Colonic mucosa (tissue), 4 donors: ENCODE measurements at regions of chr17 and their contacts with region 1.

Region 1: DNA sequence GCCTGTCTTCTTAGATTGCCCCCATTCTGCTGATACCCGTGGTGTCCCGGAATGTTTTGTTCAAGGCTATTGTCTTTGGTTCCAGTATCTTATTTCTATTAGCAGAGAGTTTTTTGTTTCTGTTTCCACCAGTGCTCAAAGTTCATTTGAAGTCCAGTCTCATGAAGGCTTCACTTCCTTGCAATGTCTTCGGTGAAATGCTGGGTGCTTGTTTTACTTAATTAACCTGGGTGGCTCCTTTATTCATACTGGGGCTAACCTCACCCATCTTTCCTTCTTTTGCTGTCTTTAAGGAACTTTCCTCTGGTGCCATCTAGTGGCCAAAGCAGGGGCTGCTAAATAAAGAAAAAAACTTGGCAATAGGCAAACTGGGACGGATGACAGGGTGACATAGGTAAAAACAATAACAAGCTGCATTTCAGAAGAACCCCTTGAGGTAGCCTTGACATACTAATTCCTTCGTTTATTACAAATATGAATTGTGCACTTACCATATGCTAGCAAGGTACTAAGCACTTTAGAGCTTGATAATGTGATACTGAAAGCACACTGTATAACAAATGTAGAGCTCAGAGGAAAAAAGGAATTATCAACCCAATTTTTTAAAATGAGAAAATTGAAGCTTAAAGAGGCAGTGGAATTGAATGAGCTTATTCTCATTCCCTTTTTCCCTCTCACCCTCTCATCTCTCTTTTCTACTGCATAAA is 2.8 kb upstream of the SMIM36 start:
- DNase-seq: peak; percentile 88
- H3K4me3 ChIP-seq: no peak overlapping the region
- H3K27ac ChIP-seq: no peak overlapping the region
- H3K4me1 ChIP-seq: no peaks in the 10 kb centered on the region
- H3K27me3 ChIP-seq: no peaks in the 10 kb centered on the region
- CTCF ChIP-seq: peak; percentile 96

Region 2: DNA sequence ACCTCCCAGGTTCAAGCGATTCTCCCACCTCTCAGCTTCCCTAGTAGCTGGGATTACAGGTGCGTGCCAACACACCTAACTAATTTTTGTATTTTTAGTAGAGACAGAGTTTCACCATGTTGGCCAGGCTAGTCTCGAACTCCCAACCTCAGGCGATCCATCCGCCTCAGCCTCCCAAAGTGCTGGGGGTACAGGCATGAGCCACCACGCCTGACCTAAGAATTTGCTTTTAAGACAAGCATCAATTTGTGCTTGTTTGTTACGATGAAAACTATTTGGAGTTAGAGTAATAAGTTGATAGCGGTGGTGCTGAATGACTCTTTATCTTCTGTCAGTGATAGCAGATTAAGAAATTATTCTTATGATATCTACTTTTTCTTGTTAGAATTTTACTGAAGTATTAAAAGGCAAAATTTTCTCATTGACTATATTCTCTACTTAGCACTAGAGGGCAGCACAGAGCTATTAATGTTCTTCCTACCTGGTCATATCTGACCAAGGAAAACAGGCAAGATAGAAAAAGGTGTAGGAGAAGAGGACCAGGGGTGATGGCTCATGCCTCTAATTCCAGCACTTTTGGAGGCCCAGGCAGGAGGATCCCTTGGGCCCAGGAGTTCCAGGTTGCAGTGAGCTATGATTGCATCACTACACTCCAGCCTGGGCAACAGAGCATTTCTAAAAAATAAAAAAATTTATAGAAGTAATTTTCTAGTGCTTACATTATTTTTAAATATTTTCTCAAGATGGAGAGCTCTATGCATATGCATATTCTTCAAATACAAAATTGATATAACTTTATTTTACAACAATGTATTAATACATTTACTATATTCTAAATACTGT is 521.0 kb before region 1 on chr17:
- intact Hi-C with region 1: loop called (anchors 5 kb)
- DNase-seq: no peak
- H3K4me3 ChIP-seq: no peak overlapping the region
- H3K27ac ChIP-seq: no peak overlapping the region
- H3K4me1 ChIP-seq: no peaks in the 10 kb centered on the region
- H3K27me3 ChIP-seq: no peaks in the 10 kb centered on the region
- CTCF ChIP-seq: peak; percentile 55

Region 3: DNA sequence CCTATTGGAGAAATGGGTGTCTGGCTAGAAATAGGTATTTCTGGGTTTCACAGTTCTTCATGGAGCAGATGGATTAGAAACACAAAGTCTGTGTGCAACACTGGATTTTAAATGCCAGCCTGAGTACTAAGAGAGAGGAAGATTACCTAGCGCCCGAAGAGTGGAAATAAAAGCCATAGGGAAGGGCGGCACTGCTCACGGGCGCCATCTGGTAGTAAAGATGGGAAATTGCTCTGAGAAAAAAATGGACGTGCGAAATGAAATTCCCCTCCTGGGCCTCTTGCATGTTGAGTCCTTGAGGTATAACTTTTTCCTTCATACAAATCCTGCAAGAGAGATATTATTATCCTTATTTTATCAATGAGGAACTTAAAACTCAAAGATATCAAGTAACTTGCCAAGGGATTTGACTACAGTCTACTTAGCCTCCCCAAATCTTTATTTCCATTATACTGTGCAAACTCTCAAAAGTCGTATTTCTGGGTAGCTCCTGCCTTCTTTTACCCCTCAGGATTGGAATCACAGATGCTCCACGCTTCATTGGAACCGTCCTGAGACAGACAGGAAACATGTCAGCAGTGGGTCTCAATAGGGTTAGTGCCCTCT is 165.2 kb before region 1 on chr17:
- intact Hi-C with region 1: loop called (anchors 5 kb)
- DNase-seq: peak; percentile 46
- H3K4me3 ChIP-seq: no peak overlapping the region
- H3K27ac ChIP-seq: no peak overlapping the region
- H3K4me1 ChIP-seq: no peaks in the 10 kb centered on the region
- H3K27me3 ChIP-seq: no peaks in the 10 kb centered on the region
- CTCF ChIP-seq: peak; percentile 91

Region 4: DNA sequence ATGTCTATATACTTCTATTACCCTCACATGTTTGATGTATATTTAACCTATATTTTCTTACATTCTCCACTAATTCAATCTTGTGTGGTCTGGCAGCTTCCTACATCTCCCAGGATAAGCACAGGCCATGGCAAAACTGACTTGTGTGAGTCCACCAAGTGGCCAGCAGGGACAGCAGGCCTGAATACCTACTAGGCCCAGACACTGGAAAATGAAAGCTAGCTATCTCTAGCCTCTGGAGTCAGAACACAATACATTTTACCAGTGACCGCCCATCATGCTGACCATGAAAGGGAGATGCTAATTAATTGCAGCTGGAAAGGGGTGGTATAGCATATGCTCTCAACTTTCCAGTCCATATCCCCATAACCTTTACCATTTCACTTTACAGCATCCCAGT is 369.1 kb after region 1 on chr17:
- intact Hi-C with region 1: no loop called
- DNase-seq: no peak
- H3K4me3 ChIP-seq: no peak overlapping the region
- H3K27ac ChIP-seq: no peak overlapping the region
- H3K4me1 ChIP-seq: no peaks in the 10 kb centered on the region
- H3K27me3 ChIP-seq: no peaks in the 10 kb centered on the region
- CTCF ChIP-seq: no peak